ENCODE measurements at regions of chr2 and their contacts with region 1.

Region 1: DNA sequence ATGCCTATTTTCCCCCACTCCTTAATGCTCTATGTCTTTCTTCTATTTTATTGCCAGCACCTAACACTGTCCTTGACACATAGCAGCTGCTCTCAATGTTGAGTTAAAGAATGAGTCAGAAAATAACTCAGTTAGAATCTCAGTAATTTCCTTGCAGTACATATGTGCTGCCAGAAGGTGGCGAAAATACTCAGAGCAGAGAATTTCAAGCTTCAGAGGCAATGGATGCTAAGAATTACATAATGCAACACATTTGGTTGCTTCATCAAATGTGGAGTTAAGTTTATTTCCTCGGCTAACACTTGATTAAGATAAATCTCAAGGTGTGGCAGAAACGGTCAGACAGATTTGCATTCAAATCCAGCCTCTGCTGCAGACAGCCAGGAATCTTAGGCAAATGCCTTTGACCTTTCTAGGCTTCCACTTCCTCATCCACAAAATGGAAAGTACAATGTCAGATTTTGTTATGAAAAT is 105.6 kb downstream of the VSNL1 start:
- DNase-seq: peak; percentile 47 to 76 (median 67)
- H3K4me3 ChIP-seq: no peak overlapping the region
- H3K27ac ChIP-seq: no peak overlapping the region
- H3K4me1 ChIP-seq: peaks cover 0 to 24% (median 4%) of the 10 kb centered on the region in 4 experiments
- H3K27me3 ChIP-seq: no peaks in the 10 kb centered on the region

Region 2: DNA sequence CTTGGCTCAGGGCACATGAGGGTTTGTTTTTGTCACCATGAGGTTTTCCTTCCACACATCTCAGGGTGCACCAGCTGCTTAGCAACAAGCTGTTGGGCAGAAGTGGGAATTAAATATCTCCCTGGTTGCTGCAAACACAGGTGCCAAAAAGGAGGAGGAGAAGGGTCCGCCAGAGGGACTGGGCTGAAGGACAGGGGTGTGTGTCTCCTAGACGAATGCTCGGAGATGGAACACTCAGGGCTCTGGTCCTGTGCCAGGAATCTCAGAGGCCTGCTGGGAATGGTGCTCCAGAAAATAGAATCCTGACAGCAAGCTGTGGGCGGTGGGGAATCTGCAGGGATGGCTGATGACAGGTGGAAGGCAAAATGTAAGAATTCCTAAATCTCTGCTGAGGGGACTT is 11.1 kb before region 1 on chr2:
- CTCF ChIA-PET with region 1: interaction called, 24 read pairs
- POLR2A ChIA-PET with region 1: no interaction called
- DNase-seq: no peak
- H3K4me3 ChIP-seq: no peak overlapping the region
- H3K27ac ChIP-seq: no peak overlapping the region
- H3K4me1 ChIP-seq: no peaks in the 10 kb centered on the region
- H3K27me3 ChIP-seq: peaks cover 0 to 9% (median 0%) of the 10 kb centered on the region in 5 experiments

Region 3: DNA sequence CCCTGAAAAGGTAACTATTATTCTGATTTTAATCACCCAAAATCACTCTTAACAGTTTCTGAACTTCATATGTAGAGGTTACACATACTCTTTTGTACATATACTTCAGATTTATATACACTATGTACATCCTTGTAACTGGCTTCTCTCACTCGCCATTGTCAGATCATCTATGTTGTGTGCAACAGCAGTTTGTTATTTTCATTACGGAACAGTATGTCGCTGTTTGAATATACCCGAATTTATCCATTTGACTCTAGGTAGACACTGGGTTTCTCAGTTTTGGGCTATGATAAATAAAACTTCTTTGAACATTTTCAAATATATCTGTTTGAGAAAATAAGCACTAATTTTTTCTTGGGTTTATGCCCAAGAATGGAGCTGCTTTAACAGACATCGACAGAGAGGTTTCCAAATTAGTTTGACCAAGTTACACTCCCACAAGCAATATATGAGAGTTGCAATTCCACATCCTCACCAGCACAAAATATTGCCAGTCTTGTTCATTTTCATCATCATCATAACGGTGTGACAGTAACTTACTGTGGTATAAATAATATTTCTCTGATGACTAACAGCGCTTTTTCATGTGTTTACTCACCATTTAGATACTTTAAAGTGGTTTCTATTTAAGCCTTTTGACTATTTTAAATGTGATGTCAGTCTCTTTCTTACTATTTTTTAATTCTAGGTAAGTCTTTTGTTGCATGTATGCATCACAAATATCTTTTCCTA is 26.6 kb after region 1 on chr2:
- CTCF ChIA-PET with region 1: interaction called, 43 read pairs
- POLR2A ChIA-PET with region 1: no interaction called
- DNase-seq: no peak
- H3K4me3 ChIP-seq: no peak overlapping the region
- H3K27ac ChIP-seq: no peak overlapping the region
- H3K4me1 ChIP-seq: no peaks in the 10 kb centered on the region
- H3K27me3 ChIP-seq: no peaks in the 10 kb centered on the region

Measured in common myeloid progenitor, CD34-positive (primary cell).